Activated CD4-positive, alpha-beta T cell treated with anti-CD3 and anti-CD28 coated beads, Interleukin-2, amount 10 ng/mL, durations not matched to agents 24 days and 14 days (primary cell): ENCODE measurements at regions of chr7 and their contacts with region 1.

Region 1: DNA sequence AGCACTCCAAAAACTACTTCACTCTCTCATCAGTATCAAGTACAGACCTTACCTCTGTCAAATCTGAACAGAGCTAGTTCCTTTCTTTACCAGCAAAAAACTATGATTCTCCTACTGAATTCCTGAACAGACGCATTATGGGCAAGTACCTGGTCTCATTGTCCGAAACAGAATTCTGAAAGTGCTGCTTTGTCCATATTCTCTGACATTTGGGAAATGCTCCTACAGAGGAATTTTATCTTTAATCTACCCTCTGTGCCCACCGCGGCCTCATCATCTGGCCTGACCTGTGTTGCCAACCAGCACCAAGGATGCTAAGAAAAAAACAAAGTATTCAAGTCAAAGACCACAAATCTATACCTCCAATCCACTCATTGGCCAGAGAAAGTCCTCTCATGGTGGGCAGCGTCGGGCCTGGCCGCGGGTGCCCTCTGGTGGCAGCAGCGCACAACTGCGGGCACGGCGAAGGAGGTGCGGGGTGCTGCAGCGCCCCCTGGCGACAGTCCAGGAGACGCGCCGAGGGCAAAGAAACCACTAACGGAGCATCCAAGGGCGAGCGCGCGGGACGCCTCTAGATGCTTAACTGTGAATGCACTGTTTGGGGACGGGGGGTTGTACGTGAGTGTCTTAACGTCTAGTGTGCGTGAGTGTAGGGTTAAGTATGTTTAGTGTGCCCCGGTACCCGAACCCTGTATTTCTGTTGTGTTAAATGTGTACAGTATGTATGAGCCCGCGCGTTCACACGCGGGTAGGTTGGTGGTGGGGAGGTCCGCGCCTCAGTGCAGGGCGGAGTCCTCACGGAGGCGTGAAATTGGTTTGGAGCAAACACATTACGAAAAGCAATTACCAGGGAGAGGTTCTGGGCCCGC is 5.0 kb upstream of the GBX1 start:
- DNase-seq: peak; percentile 95
- H3K4me3 Mint-ChIP-seq: no peak overlapping the region
- H3K27ac Mint-ChIP-seq: peak overlapping the region; percentile 13
- H3K4me1 Mint-ChIP-seq: peaks cover 12% of the 10 kb centered on the region
- H3K27me3 Mint-ChIP-seq: peaks cover 54% of the 10 kb centered on the region

Region 2: GRCh38 chr7:150898475-150899011 is 274.0 kb before region 1 on chr7:
- intact Hi-C with region 1: loop called (anchors 5 kb)
- DNase-seq: peak; percentile 93
- H3K4me3 Mint-ChIP-seq: no peak overlapping the region
- H3K27ac Mint-ChIP-seq: no peak overlapping the region
- H3K4me1 Mint-ChIP-seq: peaks cover 4% of the 10 kb centered on the region
- H3K27me3 Mint-ChIP-seq: peaks cover 56% of the 10 kb centered on the region

Region 3: GRCh38 chr7:151123822-151124464 is 48.6 kb before region 1 on chr7:
- intact Hi-C with region 1: loop called (anchors 1 kb)
- DNase-seq: peak; percentile 95
- H3K4me3 Mint-ChIP-seq: no peak overlapping the region
- H3K27ac Mint-ChIP-seq: no peak overlapping the region
- H3K4me1 Mint-ChIP-seq: no peaks in the 10 kb centered on the region
- H3K27me3 Mint-ChIP-seq: no peaks in the 10 kb centered on the region

Region 4: DNA sequence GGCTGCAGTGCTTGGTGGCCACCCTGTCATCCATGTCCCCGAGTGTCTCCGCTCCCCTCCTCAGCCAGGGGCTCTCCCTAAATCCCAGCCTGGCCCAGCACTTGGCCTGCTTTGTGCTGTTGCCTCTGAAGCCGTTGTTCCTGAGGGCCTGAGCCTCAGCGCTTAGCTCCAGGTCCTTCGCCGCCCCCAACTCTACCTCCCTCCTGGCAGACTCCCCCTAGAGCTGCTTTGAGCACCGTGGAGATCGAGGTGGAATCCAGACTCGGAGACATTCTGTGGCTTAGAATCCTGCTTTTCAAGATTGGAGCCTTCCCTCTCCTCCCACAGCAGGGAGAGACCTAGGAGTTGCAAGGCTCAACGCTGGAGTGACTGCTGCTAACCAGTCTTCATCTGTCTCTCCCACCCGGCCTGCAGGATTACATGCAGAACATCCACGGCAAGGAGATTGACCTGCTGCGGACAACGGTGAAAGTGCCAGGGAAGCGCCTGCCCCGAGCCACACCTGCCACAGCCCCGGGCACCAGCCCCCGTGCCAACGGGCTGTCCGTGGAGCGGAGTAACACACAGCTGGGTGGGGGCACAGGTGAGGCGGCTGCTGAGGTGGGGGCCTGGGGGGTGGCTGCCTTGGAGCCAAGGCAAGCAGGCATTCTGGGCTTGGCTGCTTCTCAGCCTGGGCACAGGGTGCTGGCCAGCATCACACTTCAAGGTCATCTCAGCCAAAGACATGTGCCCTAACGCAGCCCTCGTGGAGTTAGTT is 38.3 kb before region 1 on chr7:
- intact Hi-C with region 1: no loop called
- DNase-seq: no peak
- H3K4me3 Mint-ChIP-seq: no peak overlapping the region
- H3K27ac Mint-ChIP-seq: no peak overlapping the region
- H3K4me1 Mint-ChIP-seq: no peaks in the 10 kb centered on the region
- H3K27me3 Mint-ChIP-seq: no peaks in the 10 kb centered on the region

Region 5: DNA sequence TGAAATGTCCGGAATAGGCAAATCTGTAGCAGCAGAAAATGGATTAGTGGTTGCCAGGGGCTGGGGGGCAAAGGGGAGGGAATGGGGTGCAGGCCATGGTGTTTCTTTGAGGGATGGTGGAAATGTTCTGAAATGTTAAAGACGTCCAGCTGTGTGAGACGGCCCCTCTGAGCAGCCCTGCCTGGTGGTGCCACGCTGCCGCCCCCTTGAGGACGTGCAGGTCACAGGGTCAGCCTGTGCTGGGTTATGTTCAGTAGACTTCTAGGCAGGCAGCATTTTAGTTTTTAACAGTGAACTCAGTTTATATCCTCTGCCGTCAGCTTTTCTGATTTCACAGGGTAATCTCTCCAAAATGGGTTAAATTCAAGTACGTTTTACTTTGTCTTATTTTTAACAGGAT is 178.5 kb after region 1 on chr7:
- intact Hi-C with region 1: loop called (anchors 2 kb)
- DNase-seq: peak; percentile 78
- H3K4me3 Mint-ChIP-seq: peak overlapping the region; percentile 80
- H3K27ac Mint-ChIP-seq: peak overlapping the region; percentile 93
- H3K4me1 Mint-ChIP-seq: peaks cover 40% of the 10 kb centered on the region
- H3K27me3 Mint-ChIP-seq: no peaks in the 10 kb centered on the region